Endothelial cell of umbilical vein (primary cell): ENCODE measurements at regions of chr12 and their contacts with region 1.

Region 1: GRCh38 chr12:32586390-32586789 is 92.7 kb upstream of the DNM1L start:
- DNase-seq: peak; percentile 96
- H3K4me3 ChIP-seq: no peak overlapping the region
- H3K27ac ChIP-seq: peak overlapping the region; percentile 72
- H3K4me1 ChIP-seq: peaks cover 32% of the 10 kb centered on the region
- H3K27me3 ChIP-seq: no peaks in the 10 kb centered on the region
- CTCF ChIP-seq: no peak
- POLR2A ChIP-seq: peak; percentile 16

Region 2: GRCh38 chr12:32482226-32482625 is 104.2 kb before region 1 on chr12:
- CTCF ChIA-PET with region 1: no interaction called
- POLR2A ChIA-PET with region 1: no interaction called
- dilution Hi-C with region 1: no loop called
- intact Hi-C with region 1: loop called (anchors 1 kb)
- DNase-seq: peak; percentile 71
- H3K4me3 ChIP-seq: no peak overlapping the region
- H3K27ac ChIP-seq: peak overlapping the region; percentile 47
- H3K4me1 ChIP-seq: peaks cover 53% of the 10 kb centered on the region
- H3K27me3 ChIP-seq: no peaks in the 10 kb centered on the region
- CTCF ChIP-seq: no peak
- POLR2A ChIP-seq: no peak

Region 3: DNA sequence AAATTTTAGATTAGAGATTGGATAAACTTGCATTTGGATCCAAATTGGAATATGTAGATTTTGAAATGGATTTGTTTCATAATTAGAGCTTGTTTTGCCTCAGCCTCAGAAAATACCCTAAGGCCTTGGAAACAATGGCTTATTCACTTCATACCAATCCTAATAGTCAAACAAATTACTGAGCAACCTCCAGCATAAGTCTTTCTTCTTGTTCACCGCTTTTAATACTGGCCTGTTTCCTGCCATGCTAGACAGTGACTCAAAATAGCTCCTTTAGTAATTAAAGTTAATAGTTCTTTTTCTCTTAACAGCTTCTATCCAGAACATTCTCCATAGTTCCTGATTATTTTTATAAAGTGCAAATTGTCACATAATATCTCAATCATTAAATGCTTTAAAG is 18.1 kb before region 1 on chr12:
- CTCF ChIA-PET with region 1: interaction called, 12 read pairs
- POLR2A ChIA-PET with region 1: interaction called, 5 read pairs
- dilution Hi-C with region 1: no loop called
- intact Hi-C with region 1: loop called (anchors 2 kb)
- DNase-seq: peak; percentile 87
- H3K4me3 ChIP-seq: peak overlapping the region in 1 of 3 experiments; percentile 5
- H3K27ac ChIP-seq: peak overlapping the region; percentile 79
- H3K4me1 ChIP-seq: peaks cover 20% of the 10 kb centered on the region
- H3K27me3 ChIP-seq: no peaks in the 10 kb centered on the region
- CTCF ChIP-seq: no peak
- POLR2A ChIP-seq: no peak